ENCODE measurements at regions of chr4 and their contacts with region 1.

Region 1: DNA sequence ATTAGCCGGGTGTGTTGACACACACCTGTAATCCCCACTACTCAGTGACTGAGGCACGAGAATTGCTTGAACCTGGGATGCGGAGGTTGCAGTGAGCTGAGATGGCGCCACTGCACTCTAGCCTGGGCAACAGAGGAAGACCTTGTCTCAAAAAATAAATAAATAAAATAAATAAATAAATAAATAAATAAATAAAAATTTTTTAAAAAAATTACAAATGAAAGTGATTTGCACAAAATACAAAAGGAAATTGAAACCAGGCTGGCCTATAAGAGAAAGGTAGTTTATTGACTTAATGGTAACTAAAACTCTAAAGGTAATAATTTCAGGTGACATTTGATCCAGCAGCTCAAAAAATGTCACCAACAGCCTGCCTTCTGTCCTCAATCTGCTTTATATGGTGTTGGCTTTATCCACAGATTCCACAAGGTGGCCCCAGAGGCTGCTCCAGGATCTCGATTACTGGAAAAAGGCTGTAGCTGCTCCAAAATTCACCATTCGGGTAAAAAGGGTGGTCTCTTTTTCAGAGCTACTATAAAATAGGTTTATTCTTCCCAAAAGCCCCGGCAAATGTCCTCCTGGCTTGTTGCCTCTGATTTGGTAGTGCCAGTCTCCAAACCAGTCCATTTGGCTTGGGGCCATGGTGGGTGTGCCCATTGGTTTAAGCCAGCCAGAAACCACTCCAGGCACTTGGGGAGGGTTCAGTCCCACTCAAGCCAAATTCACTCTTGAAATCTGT is 61.4 kb upstream of the TRIM2 start:
- ATAC-seq: peak; percentile 68 to 80 (median 72)
- H3K4me3 ChIP-seq: no peak overlapping the region
- H3K27ac ChIP-seq: peak overlapping the region; percentile 48 to 68
- H3K4me1 ChIP-seq: peaks cover 32 to 35% of the 10 kb centered on the region in 2 donors

Region 2: DNA sequence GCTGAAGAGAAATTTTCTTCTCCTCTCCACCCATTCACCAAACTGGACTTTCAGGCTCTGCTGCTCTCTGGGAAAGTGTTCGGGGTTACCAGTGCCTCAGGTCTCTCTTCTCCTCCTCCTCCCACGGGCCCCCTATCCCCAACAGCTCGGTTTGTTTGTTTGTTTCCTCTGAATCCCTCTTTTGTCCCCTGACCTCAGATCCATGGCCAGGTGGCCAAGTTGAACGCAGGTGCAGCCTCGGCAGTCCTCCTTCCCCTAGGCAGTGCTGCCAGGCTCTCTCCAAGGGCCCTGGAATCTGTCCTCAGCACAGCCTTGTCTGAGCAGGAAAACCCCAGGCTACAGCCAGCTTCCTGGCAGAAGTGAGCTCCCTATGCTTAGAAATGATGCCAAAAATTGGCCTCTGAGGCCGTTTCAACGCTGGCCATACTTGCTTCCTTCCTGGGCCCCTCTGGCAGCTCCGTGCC is 146.7 kb before region 1 on chr4:
- in situ Hi-C with region 1: no loop called
- ATAC-seq: peak in 2 of 8 experiments; percentile 11 to 36
- H3K4me3 ChIP-seq: no peak overlapping the region
- H3K27ac ChIP-seq: no peak overlapping the region
- H3K4me1 ChIP-seq: peaks cover 35 to 39% of the 10 kb centered on the region in 2 donors

Region 3: DNA sequence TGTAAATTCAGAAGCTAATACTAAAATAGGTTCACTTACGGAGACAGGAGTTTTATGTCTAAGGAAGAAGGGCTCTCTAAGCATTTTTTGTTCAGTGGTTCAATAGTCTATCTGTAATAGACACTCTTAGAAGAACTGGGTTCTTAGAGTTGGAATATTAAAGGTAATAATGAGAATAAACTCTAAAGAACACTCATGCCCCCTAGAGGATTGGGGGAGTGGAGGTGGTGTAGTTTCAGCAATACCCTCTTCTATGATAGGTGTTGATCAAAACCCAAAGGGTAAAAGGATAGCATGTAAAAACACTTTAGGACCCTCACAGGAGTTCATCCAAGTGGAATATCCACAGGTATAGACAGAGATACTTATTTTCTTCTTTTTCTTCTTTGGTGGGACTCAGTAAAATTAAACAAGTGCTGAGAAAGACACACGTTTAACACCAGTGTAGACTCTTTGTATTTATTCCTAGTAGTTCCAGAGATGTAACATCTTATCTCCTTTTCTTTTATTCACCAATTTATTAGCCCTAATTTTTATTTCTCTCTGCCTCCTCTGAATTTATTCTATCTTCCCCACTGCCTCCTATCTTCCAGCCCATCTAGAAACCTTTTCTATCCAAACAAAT is 175.9 kb after region 1 on chr4:
- in situ Hi-C with region 1: loop called in 5 of 9 experiments (anchors 5 to 25 kb)
- ATAC-seq: peak in 7 of 8 experiments; percentile 54 to 80 (median 70)
- H3K4me3 ChIP-seq: no peak overlapping the region
- H3K27ac ChIP-seq: no peak overlapping the region
- H3K4me1 ChIP-seq: no peaks in the 10 kb centered on the region

Region 4: GRCh38 chr4:153326513-153326912 is 183.6 kb after region 1 on chr4:
- in situ Hi-C with region 1: loop called in 4 of 9 experiments (anchors 10 to 25 kb)
- ATAC-seq: no peak
- H3K4me3 ChIP-seq: no peak overlapping the region
- H3K27ac ChIP-seq: no peak overlapping the region
- H3K4me1 ChIP-seq: peaks cover 0 to 8% of the 10 kb centered on the region in 2 donors